ENCODE measurements at regions of chr14 and their contacts with region 1.

Region 1: DNA sequence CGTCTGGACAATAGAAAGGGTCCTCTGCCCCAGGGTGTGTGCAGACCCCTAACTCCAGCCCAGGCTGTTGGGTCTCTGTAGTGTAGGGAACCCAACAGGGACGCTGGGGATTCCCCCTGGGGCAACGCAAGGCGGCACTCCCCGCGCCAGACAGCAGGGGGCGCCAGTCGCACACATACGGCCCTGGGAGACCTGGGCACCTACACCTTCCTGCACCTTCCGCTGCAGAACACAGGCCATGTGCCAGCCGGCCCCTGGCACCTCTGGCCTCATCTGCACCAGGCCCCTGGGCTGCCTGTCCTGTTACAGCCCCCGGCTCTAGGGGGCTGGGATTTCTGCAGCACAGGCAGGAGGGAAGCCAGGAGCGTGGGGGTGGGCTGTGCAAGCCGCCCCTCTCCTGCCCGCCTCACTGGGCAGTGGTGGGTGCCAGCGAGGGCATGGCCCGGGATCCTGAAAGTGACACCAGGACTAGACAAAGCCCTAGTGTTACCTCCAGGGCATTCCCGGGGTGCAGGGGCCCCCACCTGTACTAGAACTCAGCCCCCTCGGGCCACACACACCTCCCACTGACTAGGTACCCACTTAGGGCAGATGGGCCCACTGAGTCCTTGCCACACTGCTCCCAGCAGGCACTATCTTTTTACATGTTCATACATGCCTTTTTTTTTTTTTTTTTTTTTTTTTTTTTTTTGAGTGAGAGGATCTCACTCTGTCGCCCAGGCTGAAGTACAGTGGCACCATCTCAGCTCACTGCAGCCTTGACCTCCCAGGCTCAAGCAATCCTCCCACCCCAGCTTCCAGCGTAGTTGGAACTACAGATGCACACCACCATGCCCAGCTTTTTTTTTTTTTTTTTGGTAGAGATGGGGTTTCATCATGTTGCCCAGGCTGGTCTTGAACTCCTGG is 37.5 kb downstream of the CCNK start:
- DNase-seq: peak; percentile 78
- ATAC-seq: peak; percentile 87
- H3K4me3 ChIP-seq: no peak overlapping the region
- H3K4me3 Mint-ChIP-seq: no peak overlapping the region
- H3K27ac ChIP-seq: no peak overlapping the region
- H3K27ac Mint-ChIP-seq: no peak overlapping the region
- H3K4me1 ChIP-seq: no peaks in the 10 kb centered on the region
- H3K4me1 Mint-ChIP-seq: no peaks in the 10 kb centered on the region
- H3K27me3 ChIP-seq: no peaks in the 10 kb centered on the region
- H3K27me3 Mint-ChIP-seq: no peaks in the 10 kb centered on the region
- CTCF ChIP-seq: peak; percentile 94

Region 2: DNA sequence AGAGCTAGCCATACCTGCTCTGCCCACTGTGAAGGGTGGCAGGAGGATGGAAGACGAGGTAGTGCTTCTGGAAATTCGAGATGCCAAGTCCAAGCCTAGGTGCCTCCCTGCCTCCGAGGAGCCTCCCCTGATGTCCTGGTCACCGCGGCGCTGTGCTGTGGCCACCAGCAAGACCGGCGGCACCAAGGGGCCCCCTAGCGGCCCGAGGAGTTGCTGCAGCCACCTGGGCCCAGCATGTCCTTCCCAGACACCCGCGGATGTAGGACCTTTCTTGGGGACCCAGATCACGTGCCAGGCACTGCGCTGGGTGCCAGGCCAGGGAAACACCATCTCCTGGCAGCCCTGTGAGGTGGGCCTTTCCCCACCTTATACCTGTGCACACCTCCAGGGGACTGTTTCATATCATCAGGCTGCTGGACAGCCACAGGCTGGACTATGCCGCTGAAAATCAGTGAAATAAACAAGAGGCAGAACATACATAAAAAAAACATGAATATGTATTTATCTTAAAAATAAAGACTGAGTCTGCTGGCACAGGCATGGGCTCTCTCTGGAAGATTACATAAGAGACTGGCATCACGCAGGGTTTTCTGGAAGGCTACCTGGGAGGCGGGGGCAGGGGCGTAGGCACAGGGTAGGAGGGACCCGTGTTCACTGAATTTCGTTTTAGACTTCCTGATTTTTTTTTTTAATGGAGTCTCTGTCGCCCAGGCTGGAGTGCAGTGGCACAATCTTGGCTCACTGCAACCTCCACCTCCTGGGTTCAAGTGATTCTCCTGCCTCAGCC is 110.3 kb after region 1 on chr14:
- CTCF ChIA-PET with region 1: interaction called, 6 read pairs
- POLR2A ChIA-PET with region 1: no interaction called
- intact Hi-C with region 1: loop called (anchors 1 kb)
- DNase-seq: peak; percentile 53
- ATAC-seq: peak; percentile 61
- H3K4me3 ChIP-seq: no peak overlapping the region
- H3K4me3 Mint-ChIP-seq: no peak overlapping the region
- H3K27ac ChIP-seq: no peak overlapping the region
- H3K27ac Mint-ChIP-seq: no peak overlapping the region
- H3K4me1 ChIP-seq: peaks cover 0 to 4% of the 10 kb centered on the region in 2 donors
- H3K4me1 Mint-ChIP-seq: peaks cover 3% of the 10 kb centered on the region
- H3K27me3 ChIP-seq: peaks cover 0 to 13% (median 0%) of the 10 kb centered on the region in 4 experiments
- H3K27me3 Mint-ChIP-seq: peaks cover 37% of the 10 kb centered on the region
- CTCF ChIP-seq: peak; percentile 81

Measured in B cell (primary cell).